ENCODE measurements at regions of chr12 and their contacts with region 1.

Region 1: DNA sequence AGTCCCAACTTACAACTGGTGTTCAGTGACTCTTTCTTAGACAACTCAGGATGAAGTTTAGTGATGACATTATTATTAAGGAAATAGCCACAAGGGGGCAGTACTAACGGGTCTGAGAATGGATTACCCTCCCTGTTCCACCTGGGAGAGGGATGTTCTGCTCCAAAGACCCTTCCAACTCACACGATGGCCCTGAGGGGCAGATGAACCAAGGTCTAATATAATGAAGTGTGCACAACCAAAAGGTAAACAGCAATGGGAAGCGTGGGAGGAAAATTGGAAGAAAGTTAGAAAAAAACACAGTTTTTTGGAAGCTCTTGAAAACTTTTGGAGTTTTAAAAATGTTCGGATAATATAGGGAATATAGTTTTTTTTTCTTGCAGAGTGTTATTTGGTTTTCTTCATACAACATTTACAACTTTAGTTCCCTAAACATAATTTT is 24.0 kb downstream of the FGF6 start:
- DNase-seq: peak in 2 of 5 donors; percentile 9 to 30
- H3K4me3 ChIP-seq: no peak overlapping the region
- H3K4me3 Mint-ChIP-seq: no peak overlapping the region
- H3K27ac ChIP-seq: no peak overlapping the region
- H3K27ac Mint-ChIP-seq: no peak overlapping the region
- H3K4me1 ChIP-seq: no peaks in the 10 kb centered on the region
- H3K4me1 Mint-ChIP-seq: no peaks in the 10 kb centered on the region
- H3K27me3 ChIP-seq: no peaks in the 10 kb centered on the region
- H3K27me3 Mint-ChIP-seq: peaks cover 6 to 14% of the 10 kb centered on the region in 2 donors

Region 2: DNA sequence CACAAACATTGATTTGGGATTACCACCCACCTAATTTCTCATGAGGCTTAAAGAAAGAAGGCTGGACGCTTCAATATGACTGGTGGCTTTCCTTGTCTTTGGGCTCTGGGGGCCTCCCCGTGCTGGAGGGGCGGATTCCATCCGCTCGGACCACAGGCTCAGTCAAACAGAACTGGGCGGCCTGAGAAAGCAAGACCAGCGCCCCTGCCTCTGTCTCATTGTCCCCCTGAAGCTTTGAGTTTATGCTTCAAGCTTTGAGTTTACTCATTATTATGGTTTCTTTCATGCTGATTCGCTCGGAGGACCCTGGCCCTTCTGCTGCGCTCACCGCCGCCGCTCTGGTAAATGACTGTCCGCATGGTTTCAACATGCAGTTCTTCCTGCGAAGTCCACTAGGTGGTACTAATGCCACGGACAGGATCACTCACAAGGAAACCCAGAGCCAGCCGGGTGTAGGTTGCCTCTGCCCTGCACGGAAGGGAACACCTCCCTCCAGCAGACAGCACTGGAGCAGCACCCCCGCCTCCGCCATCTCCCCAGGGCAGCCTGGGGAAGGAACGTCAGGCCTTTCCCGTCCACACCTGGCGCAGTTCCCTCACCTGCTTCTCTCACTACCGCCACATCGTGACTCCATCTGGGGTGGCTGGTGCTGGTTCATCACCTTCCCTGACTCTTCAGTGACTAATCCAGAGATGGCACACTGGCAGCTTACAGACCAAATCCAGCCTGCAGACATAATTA is 113.8 kb before region 1 on chr12:
- CTCF ChIA-PET with region 1: no interaction called
- POLR2A ChIA-PET with region 1: no interaction called
- DNase-seq: no peak
- H3K4me3 ChIP-seq: no peak overlapping the region
- H3K4me3 Mint-ChIP-seq: no peak overlapping the region
- H3K27ac ChIP-seq: no peak overlapping the region
- H3K27ac Mint-ChIP-seq: peak overlapping the region in 1 of 8 donors; percentile 48
- H3K4me1 ChIP-seq: no peaks in the 10 kb centered on the region
- H3K4me1 Mint-ChIP-seq: peaks cover 0 to 8% (median 0%) of the 10 kb centered on the region in 3 donors
- H3K27me3 ChIP-seq: no peaks in the 10 kb centered on the region
- H3K27me3 Mint-ChIP-seq: no peaks in the 10 kb centered on the region

Region 3: DNA sequence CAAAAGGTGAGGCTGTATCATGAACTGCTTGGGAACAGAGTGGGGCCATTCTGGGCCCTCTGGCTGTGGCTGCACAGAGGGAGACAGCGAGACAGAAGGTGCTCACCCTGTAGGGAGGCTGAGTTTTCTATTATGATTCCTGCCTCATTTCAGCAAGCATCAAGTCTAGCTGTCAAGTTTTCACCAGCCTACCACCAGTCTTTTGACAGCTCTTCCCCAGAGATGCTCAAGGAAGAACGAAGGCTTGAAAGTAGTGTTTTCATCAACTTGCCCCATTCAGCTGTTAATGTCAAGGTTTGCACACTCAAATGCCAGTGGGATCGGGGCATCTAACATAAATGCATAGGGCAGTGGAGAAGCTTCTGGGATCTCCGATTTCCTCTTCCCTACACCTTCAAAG is 52.1 kb before region 1 on chr12:
- CTCF ChIA-PET with region 1: no interaction called
- POLR2A ChIA-PET with region 1: interaction called, 12 read pairs
- DNase-seq: no peak
- H3K4me3 ChIP-seq: no peak overlapping the region
- H3K4me3 Mint-ChIP-seq: no peak overlapping the region
- H3K27ac ChIP-seq: no peak overlapping the region
- H3K27ac Mint-ChIP-seq: no peak overlapping the region
- H3K4me1 ChIP-seq: no peaks in the 10 kb centered on the region
- H3K4me1 Mint-ChIP-seq: no peaks in the 10 kb centered on the region
- H3K27me3 ChIP-seq: no peaks in the 10 kb centered on the region
- H3K27me3 Mint-ChIP-seq: peaks cover 18 to 46% of the 10 kb centered on the region in 2 donors

Region 4: GRCh38 chr12:4526923-4527546 is 105.4 kb after region 1 on chr12:
- CTCF ChIA-PET with region 1: interaction called, 17 read pairs
- POLR2A ChIA-PET with region 1: no interaction called
- DNase-seq: peak in 2 of 5 donors; percentile 19 to 21
- H3K4me3 ChIP-seq: no peak overlapping the region
- H3K4me3 Mint-ChIP-seq: no peak overlapping the region
- H3K27ac ChIP-seq: no peak overlapping the region
- H3K27ac Mint-ChIP-seq: peak overlapping the region in 1 of 8 donors; percentile 32
- H3K4me1 ChIP-seq: peaks cover 8% of the 10 kb centered on the region
- H3K4me1 Mint-ChIP-seq: peaks cover 2 to 7% (median 3%) of the 10 kb centered on the region in 3 donors
- H3K27me3 ChIP-seq: no peaks in the 10 kb centered on the region
- H3K27me3 Mint-ChIP-seq: no peaks in the 10 kb centered on the region

Measured in CD8-positive, alpha-beta memory T cell (primary cell).